HEK293 (cell line): ENCODE measurements at regions of chr17 and their contacts with region 1.

Region 1: GRCh38 chr17:41695954-41696756 is 7.5 kb downstream of the EIF1 start:
- H3K4me3 ChIP-seq: no peak overlapping the region
- H3K27ac ChIP-seq: no peak overlapping the region
- H3K4me1 ChIP-seq: peaks cover 3% of the 10 kb centered on the region; the same call in 1 of the 2 replicates
- CTCF ChIP-seq: peak; percentile 50; the same call in 1 of the 2 replicates

Region 2: DNA sequence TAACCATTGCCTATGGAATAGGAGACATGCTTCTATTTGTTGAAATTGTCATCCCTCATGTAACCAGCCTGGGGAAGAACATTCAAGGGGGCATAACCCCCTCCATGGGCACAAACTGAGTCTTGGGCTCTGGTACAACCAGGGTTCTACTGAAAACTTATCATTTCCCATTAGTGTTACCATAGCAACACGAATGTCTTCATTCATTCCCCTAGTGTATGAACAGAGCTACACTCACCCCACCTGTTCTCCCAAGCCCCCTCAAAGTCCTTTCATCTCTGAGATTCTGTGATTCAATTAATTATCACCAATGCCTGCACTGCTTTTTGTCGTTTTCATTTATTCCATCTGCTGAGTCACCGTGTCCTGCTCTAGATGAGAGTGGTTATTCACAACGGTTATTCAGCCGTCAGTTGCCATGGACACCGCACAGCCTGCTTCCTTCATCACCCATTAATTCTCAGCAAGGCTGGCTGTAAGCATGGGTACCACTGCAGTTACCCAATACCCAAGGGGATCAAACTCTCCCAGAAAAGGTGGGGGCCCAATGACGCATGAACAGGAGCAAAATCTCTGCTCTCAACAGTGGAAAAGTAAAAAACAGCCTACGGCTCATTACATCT is 14.4 kb after region 1 on chr17:
- CTCF ChIA-PET with region 1: interaction called, 103 read pairs
- POLR2A ChIA-PET with region 1: interaction called, 9 read pairs
- H3K4me3 ChIP-seq: no peak overlapping the region
- H3K27ac ChIP-seq: no peak overlapping the region
- H3K4me1 ChIP-seq: no peaks in the 10 kb centered on the region
- CTCF ChIP-seq: no peak

Region 3: GRCh38 chr17:41717408-41718286 is 21.5 kb after region 1 on chr17:
- CTCF ChIA-PET with region 1: interaction called, 103 read pairs
- POLR2A ChIA-PET with region 1: interaction called, 6 read pairs
- H3K4me3 ChIP-seq: no peak overlapping the region
- H3K27ac ChIP-seq: no peak overlapping the region
- H3K4me1 ChIP-seq: 0 out of 2 replicates have a peak, but pooled peaks cover 4% of the 10 kb centered on the region
- CTCF ChIP-seq: no peak